Endothelial cell of umbilical vein (primary cell): ENCODE measurements at regions of chr4 and their contacts with region 1.

Region 1: DNA sequence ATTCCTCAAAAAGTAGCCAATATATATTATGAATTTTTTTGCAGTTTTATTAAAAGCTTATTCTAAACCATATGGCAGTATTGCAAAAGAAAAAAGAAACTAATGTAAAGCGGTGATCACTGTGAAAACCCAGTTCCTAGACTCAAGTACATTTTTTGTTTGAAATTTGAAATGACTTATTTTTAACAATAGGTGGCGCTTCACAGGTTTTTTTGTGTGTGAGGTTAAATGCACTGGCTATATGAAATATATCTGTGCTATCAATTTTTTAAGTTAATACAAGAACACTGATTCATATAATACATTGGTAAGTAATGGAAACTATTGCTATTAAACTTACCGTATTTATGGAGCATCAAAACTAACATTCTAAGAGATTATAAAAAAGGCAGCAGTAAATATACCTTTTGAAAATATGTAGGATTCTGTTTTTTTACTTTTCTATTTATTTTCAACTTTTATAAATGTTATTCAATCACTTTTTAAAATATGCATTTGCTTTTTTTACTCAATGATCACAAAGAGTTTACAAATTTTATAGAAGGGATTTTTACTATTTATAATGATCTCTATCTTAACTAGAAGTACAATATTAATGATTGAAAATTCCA is 5.6 kb upstream of the SPRY1 start:
- DNase-seq: peak; percentile 46
- H3K4me3 ChIP-seq: no peak overlapping the region
- H3K27ac ChIP-seq: no peak overlapping the region
- H3K4me1 ChIP-seq: peaks cover 31% of the 10 kb centered on the region
- H3K27me3 ChIP-seq: no peaks in the 10 kb centered on the region
- CTCF ChIP-seq: peak; percentile 19 to 29
- POLR2A ChIP-seq: no peak

Region 2: GRCh38 chr4:123250843-123251242 is 140.1 kb before region 1 on chr4:
- CTCF ChIA-PET with region 1: interaction called, 3 read pairs
- POLR2A ChIA-PET with region 1: no interaction called
- dilution Hi-C with region 1: no loop called
- intact Hi-C with region 1: loop called (anchors 5 kb)
- DNase-seq: peak; percentile 94
- H3K4me3 ChIP-seq: no peak overlapping the region
- H3K27ac ChIP-seq: no peak overlapping the region
- H3K4me1 ChIP-seq: peaks cover 28% of the 10 kb centered on the region
- H3K27me3 ChIP-seq: no peaks in the 10 kb centered on the region
- CTCF ChIP-seq: no peak
- POLR2A ChIP-seq: no peak

Region 3: GRCh38 chr4:123361195-123361861 is 29.6 kb before region 1 on chr4:
- CTCF ChIA-PET with region 1: interaction called, 8 read pairs
- POLR2A ChIA-PET with region 1: no interaction called
- dilution Hi-C with region 1: no loop called
- intact Hi-C with region 1: loop called (anchors 1 kb)
- DNase-seq: peak; percentile 93
- H3K4me3 ChIP-seq: no peak overlapping the region
- H3K27ac ChIP-seq: peak overlapping the region; percentile 98
- H3K4me1 ChIP-seq: peaks cover 24% of the 10 kb centered on the region
- H3K27me3 ChIP-seq: no peaks in the 10 kb centered on the region
- CTCF ChIP-seq: no peak
- POLR2A ChIP-seq: no peak